ENCODE measurements at regions of chr6 and their contacts with region 1.

Region 1: DNA sequence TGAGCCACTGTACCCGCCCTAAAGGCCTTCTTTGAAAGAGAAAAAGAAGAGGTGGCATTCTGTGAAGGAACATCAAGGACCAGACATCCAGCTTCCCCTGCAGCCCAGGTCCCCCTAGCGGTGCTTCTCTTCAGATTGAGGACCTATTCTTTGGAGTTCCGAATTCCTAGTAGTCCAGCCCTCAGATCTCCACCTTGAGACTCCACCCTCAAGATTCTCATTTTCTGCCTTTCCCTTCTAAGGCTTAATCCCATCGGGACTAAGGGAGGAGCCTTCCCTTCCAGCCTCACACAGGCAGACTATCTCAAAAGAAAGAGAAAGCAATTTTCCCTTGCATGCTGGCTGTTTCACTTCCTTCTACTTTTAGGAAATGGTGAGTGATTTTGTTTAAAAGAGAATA is 32.5 kb downstream of the MUC22 start:
- DNase-seq: peak in 8 of 9 experiments; percentile 4 to 56 (median 36)
- ATAC-seq: no peak
- H3K4me3 ChIP-seq: no peak overlapping the region
- H3K4me3 Mint-ChIP-seq: no peak overlapping the region
- H3K27ac ChIP-seq: no peak overlapping the region
- H3K27ac Mint-ChIP-seq: no peak overlapping the region
- H3K4me1 ChIP-seq: no peaks in the 10 kb centered on the region
- H3K4me1 Mint-ChIP-seq: peaks cover 2% of the 10 kb centered on the region
- H3K27me3 ChIP-seq: no peaks in the 10 kb centered on the region
- H3K27me3 Mint-ChIP-seq: peaks cover 34% of the 10 kb centered on the region
- CTCF ChIP-seq: no peak

Region 2: DNA sequence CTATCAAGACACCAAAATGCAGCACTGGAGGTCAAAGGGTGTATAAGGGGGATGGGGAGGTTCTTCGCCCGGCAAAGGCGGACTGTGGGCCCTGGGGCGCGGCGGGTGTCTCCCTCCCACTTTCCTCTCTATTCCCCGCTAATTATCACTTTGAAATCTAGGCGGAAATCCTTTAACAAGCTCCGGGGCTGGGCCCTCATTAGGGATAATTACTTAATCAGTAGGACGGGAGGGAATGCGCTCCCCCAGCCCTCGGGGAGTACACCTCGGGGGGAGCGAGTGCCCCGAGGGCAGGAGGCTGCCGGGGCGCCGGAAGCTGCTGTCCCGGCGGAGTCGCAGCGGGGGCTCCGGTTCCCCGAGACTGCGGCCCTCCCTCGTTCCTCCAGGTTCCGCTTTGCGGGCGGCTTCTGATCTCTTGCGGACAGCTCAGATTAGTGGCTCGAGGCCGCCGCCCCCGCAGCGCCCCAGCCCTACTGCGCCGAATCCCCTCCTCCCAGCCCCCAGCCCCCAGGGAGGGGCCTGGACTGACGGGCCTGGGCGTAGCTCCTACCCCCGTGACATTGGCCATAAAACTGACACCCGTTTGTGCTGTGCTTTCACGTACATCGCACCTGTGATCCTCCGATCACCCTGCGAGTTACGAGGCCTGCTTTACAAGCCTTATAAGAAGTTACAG is 87.3 kb before region 1 on chr6:
- CTCF ChIA-PET with region 1: no interaction called
- POLR2A ChIA-PET with region 1: interaction called, 4 read pairs
- intact Hi-C with region 1: loop called in 1 of 2 experiments (anchors 10 kb)
- DNase-seq: peak; percentile 46 to 88 (median 69)
- ATAC-seq: peak; percentile 84
- H3K4me3 ChIP-seq: peak overlapping the region; percentile 58 to 63
- H3K4me3 Mint-ChIP-seq: peak overlapping the region; percentile 86
- H3K27ac ChIP-seq: peak overlapping the region; percentile 31 to 80
- H3K27ac Mint-ChIP-seq: peak overlapping the region; percentile 84
- H3K4me1 ChIP-seq: peaks cover 17% of the 10 kb centered on the region
- H3K4me1 Mint-ChIP-seq: peaks cover 19% of the 10 kb centered on the region
- H3K27me3 ChIP-seq: peaks cover 0 to 3% of the 10 kb centered on the region in 2 experiments
- H3K27me3 Mint-ChIP-seq: peaks cover 24% of the 10 kb centered on the region
- CTCF ChIP-seq: no peak

Region 3: DNA sequence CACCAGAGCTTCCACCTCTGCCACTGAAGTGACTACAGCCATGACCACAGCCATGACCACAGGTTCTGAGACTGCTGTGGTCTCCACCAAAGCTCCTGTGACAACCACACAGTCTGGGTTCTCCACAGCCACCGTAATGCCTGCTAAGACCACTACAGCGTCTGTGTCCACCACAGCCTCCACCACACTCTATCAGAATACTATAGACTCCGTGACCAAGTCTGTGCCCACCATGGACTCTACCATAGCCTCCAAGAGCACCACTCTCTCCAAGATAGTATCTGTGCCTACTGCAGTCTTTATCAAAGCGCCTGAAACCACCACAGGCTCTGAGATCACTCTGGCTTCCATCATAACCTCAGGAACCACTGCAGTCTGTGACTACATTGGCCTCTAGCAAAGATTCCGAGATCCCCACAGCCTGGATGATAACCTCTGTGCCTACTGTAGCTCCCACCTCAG is 77.6 kb before region 1 on chr6:
- CTCF ChIA-PET with region 1: no interaction called
- POLR2A ChIA-PET with region 1: no interaction called
- intact Hi-C with region 1: loop called in 1 of 2 experiments (anchors 5 kb)
- DNase-seq: no peak
- ATAC-seq: no peak
- H3K4me3 ChIP-seq: no peak overlapping the region
- H3K4me3 Mint-ChIP-seq: no peak overlapping the region
- H3K27ac ChIP-seq: no peak overlapping the region
- H3K27ac Mint-ChIP-seq: no peak overlapping the region
- H3K4me1 ChIP-seq: peaks cover 6% of the 10 kb centered on the region
- H3K4me1 Mint-ChIP-seq: peaks cover 8% of the 10 kb centered on the region
- H3K27me3 ChIP-seq: no peaks in the 10 kb centered on the region
- H3K27me3 Mint-ChIP-seq: peaks cover 20% of the 10 kb centered on the region
- CTCF ChIP-seq: no peak

Measured in CD8-positive, alpha-beta T cell (primary cell).